ENCODE measurements at regions of chr19 and their contacts with region 1.

Region 1: DNA sequence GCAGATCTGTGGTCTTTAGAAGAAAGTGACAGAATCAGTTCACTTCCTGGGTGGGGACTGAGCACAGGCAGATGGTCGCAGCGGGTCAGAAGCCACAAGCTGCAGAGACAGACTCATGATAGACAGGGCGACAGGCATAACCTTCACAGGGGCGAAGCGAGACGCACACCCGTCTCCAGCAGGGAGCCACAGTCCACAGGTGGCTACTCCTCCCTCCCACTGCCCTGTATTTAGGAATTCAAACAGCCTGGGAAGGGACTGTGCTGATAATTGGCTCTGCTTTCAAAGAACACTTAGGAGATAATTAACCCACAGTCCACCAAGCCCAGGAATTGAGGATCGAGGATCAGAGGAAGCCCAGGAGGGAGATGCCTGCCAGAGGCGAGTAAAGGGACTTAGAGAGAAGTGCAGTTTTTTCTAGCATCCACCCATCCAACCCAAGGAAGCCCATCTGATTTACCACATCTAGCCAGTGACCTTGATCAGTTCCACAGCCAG is 23.2 kb downstream of the RFX2 start:
- DNase-seq: peak in 1 of 5 donors; percentile 41
- ATAC-seq: peak; percentile 20 to 32 (median 29)
- H3K4me3 ChIP-seq: peak overlapping the region in 2 of 12 donors; percentile 16 to 33
- H3K27ac ChIP-seq: peak overlapping the region; percentile 8 to 80 (median 50)
- H3K4me1 ChIP-seq: peaks cover 0 to 51% (median 28%) of the 10 kb centered on the region in 12 donors
- H3K27me3 ChIP-seq: no peaks in the 10 kb centered on the region
- CTCF ChIP-seq: no peak
- POLR2A ChIP-seq: no peak

Region 2: GRCh38 chr19:6103217-6103644 is 16.1 kb after region 1 on chr19:
- intact Hi-C with region 1: loop called in 1 of 10 experiments (anchors 1 kb)
- DNase-seq: peak; percentile 71 to 89 (median 76)
- ATAC-seq: peak; percentile 84 to 91 (median 86)
- H3K4me3 ChIP-seq: no peak overlapping the region
- H3K27ac ChIP-seq: peak overlapping the region in 11 of 12 donors; percentile 20 to 85 (median 61)
- H3K4me1 ChIP-seq: peaks cover 0 to 71% (median 47%) of the 10 kb centered on the region in 12 donors
- H3K27me3 ChIP-seq: no peaks in the 10 kb centered on the region
- CTCF ChIP-seq: no peak
- POLR2A ChIP-seq: no peak

Region 3: DNA sequence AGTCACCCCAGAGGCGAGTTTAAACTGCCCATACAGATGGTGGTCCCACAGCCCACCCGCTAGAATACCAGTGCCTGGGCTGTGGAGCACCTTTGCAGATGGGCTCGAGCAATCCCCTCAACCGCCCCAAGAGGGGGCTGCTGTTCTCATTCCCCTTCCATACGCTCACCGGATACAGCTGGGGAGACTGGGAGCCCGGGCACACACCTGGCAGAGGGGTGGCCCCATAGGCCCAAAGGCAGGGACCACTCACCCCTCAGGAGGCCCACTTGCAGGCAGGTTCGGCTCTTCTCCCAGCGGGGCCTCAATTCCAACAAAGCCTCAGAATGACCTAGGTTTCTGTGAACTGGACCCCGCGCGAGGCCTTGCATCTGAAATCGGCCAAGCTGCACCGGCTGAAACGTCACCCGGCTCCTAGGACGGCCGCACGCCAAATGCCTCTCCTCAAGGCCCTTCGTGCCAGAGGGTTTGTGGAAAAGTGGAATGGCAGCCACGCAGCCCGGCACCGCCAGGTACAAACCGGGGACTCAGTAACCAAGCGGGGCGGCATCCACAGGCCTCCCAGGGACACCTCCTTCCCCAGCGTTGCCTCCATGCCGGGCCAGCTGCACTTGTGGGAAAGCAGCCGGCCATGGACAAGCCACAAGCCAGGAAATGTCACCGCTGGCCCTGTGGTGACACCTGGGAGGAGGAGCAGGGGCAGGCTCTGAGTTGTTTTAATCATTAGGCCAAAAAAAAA is 174.0 kb after region 1 on chr19:
- intact Hi-C with region 1: no loop called
- DNase-seq: no peak
- ATAC-seq: peak; percentile 43 to 61 (median 52)
- H3K4me3 ChIP-seq: no peak overlapping the region
- H3K27ac ChIP-seq: no peak overlapping the region
- H3K4me1 ChIP-seq: peaks cover 0 to 24% (median 5%) of the 10 kb centered on the region in 12 donors
- H3K27me3 ChIP-seq: no peaks in the 10 kb centered on the region
- CTCF ChIP-seq: peak; percentile 35 to 64 (median 52)
- POLR2A ChIP-seq: no peak

Measured in heart left ventricle (tissue), 16 donors.